ENCODE measurements at regions of chr1 and their contacts with region 1.

Region 1: GRCh38 chr1:84143796-84144565 is at the start of gene PRKACB:
- DNase-seq: peak; percentile 82
- H3K4me3 Mint-ChIP-seq: peak within 1 kb of the TSS; percentile 85
- H3K27ac Mint-ChIP-seq: peak within 1 kb of the TSS; percentile 98
- H3K4me1 Mint-ChIP-seq: peaks cover 23% of the 10 kb centered on the region
- H3K27me3 Mint-ChIP-seq: no peaks in the 10 kb centered on the region
- total RNA-seq, gene PRKACB: 19.1 and 19.3 TPM in 2 replicates

Region 2: GRCh38 chr1:84192681-84193080 is 48.7 kb after region 1 on chr1:
- intact Hi-C with region 1: loop called (anchors 5 kb)
- DNase-seq: no peak
- H3K4me3 Mint-ChIP-seq: no peak overlapping the region
- H3K27ac Mint-ChIP-seq: no peak overlapping the region
- H3K4me1 Mint-ChIP-seq: no peaks in the 10 kb centered on the region
- H3K27me3 Mint-ChIP-seq: no peaks in the 10 kb centered on the region

Region 3: DNA sequence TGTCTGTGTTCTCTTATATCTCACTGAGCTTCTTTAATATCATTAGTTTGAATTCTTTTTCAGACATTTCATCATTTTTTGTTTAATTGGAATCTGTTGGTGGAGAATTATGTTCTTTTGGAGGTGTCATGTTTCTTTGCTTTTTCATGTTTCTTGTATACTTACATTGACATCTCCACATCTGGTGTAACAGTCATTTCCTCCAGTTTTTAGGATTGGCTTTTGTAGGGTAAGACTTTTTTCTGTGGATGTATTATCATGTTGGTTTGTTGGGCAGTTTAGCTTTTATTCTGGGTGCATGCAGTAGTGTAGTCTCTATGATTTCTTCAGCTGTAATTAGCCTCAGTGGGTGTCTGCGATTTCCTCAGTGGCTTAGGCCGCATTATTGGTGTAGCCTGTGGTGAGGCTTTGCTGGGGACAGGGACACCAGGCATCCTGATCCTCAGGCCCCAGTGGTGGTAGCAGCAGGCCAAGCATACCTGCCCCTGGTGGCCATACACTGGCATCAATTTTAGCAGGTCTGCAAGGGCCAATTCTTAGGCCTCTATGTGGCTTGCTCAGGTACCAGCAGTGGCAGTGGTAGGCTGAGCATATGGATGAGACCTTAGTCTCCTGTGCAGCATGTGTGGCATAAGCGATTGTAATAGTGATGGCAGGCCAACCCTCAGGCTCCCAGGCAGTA is 79.9 kb after region 1 on chr1:
- intact Hi-C with region 1: no loop called
- DNase-seq: no peak
- H3K4me3 Mint-ChIP-seq: no peak overlapping the region
- H3K27ac Mint-ChIP-seq: no peak overlapping the region
- H3K4me1 Mint-ChIP-seq: peaks cover 4% of the 10 kb centered on the region
- H3K27me3 Mint-ChIP-seq: no peaks in the 10 kb centered on the region

Region 4: GRCh38 chr1:84442256-84442655 is 298.3 kb after region 1 on chr1:
- intact Hi-C with region 1: loop called (anchors 1 kb)
- DNase-seq: peak; percentile 80
- H3K4me3 Mint-ChIP-seq: peak overlapping the region; percentile 28
- H3K27ac Mint-ChIP-seq: peak overlapping the region; percentile 69
- H3K4me1 Mint-ChIP-seq: peaks cover 16% of the 10 kb centered on the region
- H3K27me3 Mint-ChIP-seq: peaks cover 15% of the 10 kb centered on the region

Region 5: GRCh38 chr1:84573967-84574842 is 430.2 kb after region 1 on chr1 and contains the start of gene CTBS:
- intact Hi-C with region 1: loop called (anchors 1 kb)
- DNase-seq: peak; percentile 95
- H3K4me3 Mint-ChIP-seq: peak within 1 kb of the TSS; percentile 99
- H3K27ac Mint-ChIP-seq: peak within 1 kb of the TSS; percentile 100
- H3K4me1 Mint-ChIP-seq: peaks cover 41% of the 10 kb centered on the region
- H3K27me3 Mint-ChIP-seq: no peaks in the 10 kb centered on the region
- total RNA-seq, gene CTBS: 13.1 and 13.9 TPM in 2 replicates

Region 6: DNA sequence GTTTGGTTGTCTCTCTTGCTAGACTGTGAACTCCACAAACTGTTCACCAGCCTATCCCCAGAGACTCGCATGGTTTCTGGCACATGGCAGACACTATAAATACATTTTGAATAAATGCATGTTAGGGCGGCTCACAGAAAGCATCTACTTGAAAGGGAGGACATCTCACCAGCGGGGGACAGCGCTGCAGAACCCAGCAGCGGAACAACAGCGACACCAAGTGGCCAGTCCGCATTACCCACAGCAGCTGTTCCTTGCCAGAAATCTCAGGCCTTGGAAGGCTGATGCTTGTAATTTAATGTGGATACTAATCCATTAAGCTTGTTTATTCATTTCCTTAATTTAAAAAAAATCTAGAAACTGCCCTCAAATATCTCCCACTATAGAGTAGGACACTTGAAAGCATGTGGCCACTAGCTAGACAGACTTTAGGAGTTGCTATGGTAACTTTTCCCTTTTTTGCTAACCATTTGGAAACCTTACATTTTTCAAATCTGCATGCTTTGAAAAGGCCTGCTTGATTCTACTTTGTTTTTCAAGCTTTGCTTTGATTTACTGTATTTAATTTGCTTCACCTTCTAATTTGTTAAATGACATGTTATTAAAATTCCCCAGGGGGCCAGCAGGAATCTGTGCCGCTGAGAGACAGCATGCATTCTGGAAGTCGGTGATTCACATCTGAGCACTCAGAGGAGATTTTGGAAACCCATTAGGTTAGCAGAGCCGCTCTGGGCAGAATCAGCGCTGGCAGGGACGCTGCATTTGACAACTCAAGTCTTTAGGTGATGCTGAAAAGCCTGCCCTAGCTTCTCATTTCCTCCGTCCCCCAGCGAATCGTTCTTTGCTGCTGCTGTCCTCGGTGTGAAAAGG is 609.8 kb after region 1 on chr1:
- intact Hi-C with region 1: loop called (anchors 1 kb)
- DNase-seq: peak; percentile 92
- H3K4me3 Mint-ChIP-seq: no peak overlapping the region
- H3K27ac Mint-ChIP-seq: no peak overlapping the region
- H3K4me1 Mint-ChIP-seq: peaks cover 3% of the 10 kb centered on the region
- H3K27me3 Mint-ChIP-seq: peaks cover 31% of the 10 kb centered on the region

Region 7: GRCh38 chr1:84944767-84945486 is 800.9 kb after region 1 on chr1:
- intact Hi-C with region 1: loop called (anchors 10 kb)
- DNase-seq: peak; percentile 94
- H3K4me3 Mint-ChIP-seq: peak overlapping the region; percentile 80
- H3K27ac Mint-ChIP-seq: peak overlapping the region; percentile 86
- H3K4me1 Mint-ChIP-seq: peaks cover 27% of the 10 kb centered on the region
- H3K27me3 Mint-ChIP-seq: no peaks in the 10 kb centered on the region

Measured in activated CD4-positive, alpha-beta T cell treated with anti-CD3 and anti-CD28 coated beads, Interleukin-2, amount 10 ng/mL, durations not matched to agents 24 days and 14 days (primary cell).